ENCODE measurements at regions of chrX and their contacts with region 1.

Region 1: DNA sequence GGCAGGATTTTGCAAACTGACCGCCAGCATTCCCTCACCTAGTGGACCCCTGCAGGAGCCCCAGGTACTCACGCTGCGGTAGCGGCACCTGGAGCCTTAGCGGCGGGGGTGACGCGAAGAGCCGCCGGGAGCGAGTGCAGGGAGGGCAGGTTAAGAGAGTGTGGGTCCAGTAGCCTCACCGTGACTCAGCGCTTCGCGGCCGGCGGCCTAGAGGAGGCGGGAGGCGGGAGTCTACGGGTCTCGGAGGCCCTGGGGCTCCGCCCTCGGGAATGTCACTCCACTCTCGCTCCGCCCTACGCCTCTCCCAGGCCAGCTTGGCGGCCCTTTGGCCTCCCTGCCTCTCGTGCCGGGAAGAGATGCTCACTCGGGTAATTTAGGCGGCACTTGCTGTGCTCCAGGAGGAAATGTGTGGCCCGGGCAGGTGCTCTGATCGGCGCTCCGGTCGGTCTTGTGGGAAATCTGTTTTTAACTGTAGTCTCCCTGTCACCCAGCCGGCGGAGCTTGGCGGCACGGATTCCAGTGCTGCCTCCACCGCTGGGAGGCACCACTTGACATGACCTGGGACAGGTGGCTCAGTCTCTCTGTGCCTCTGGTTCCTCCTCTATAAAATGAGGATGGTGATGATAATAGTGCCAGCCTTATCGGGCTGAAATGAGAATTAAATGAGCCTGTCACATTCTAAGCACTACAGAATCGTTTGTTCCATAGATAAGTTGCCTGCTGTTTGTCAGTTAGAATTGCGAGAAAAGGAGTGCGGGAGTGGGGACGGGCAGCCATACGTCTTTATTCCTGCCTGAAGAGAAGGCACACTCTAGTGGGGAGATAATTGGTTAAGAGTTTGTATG is at the start of gene PIR:
- DNase-seq: peak; percentile 92
- H3K4me3 Mint-ChIP-seq: peak within 1 kb of the TSS; percentile 85
- H3K27ac Mint-ChIP-seq: peak within 1 kb of the TSS; percentile 46
- H3K4me1 Mint-ChIP-seq: peaks cover 22% of the 10 kb centered on the region
- H3K27me3 Mint-ChIP-seq: no peaks in the 10 kb centered on the region
- CTCF ChIP-seq: no peak
- total RNA-seq, gene PIR: 32.1 and 40.9 TPM in 2 replicates

Region 2: DNA sequence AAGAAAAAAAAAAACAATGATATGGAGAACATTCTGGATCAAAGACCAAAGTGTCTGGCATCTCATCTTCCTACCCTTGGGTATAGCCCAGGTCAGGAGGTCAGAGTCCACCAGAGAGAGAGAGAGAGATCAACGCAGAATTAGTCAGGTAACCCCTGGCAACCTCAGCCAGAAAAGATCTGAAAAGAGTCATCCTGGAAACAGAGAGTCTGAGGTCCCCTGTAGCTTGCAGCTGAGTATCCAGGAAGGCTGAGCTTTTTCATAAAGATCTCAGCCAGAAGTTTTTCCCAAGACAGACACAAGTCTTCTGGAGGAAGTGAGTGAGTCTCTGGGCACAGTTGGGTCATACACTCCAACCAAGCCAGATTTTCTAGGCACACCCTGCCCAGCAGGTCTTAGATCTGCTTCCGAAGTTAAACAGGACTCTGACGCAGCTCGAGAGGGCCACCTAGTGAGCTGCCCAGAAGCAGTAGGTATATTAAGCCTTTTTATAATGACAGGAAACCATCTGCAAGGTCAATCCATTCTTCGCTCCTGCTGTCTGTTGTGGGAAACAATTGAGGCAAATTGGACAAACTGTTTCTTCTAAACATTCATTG is 71.7 kb after region 1 on chrX:
- CTCF ChIA-PET with region 1: interaction called, 11 read pairs
- intact Hi-C with region 1: loop called (anchors 1 kb)
- DNase-seq: peak; percentile 70
- H3K4me3 Mint-ChIP-seq: no peak overlapping the region
- H3K27ac Mint-ChIP-seq: peak overlapping the region; percentile 47
- H3K4me1 Mint-ChIP-seq: peaks cover 14% of the 10 kb centered on the region
- H3K27me3 Mint-ChIP-seq: no peaks in the 10 kb centered on the region
- CTCF ChIP-seq: peak; percentile 29

Region 3: DNA sequence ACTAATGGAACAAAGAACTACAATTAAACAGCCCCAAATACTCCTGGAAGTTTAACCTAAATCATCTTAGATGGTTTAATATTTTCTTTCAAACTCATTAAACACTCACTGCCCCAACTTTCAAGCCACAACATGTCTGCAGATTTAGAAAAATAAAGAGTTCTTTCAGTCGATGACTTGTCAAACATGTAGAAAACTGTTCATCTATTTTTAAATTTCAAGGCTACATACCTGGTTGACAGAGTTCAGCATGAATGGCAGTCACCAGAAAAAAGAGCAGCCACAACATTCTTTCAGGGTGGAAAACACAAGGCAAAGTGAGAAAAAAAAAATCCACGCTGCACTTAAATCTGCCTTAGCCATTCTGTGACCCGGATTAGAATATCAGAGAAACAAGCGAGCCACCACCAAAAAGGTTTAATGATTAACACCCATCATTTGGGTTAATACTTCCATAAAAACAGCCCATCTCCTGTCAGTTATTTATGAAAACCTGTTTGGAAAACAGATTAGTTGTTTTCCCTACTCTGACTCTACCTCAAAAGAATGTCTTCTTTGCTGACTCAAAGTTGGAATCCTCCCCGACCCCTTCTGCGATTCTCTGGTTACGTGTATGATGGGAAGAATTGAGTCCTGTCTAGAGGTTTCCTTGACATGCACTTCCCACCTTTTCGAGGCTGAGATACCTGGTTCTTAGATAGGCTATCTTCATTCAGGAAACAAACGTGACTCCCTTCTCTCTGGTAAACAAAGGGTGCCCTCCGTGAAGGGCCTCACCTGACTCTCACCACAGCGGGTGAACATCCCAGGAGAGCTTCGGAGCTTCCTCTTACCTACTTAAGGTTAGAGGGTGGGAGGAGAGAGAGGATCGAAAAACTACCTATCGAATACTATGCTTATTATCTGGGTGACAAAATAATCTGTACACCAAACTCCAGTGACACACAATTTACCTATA is 171.4 kb after region 1 on chrX and contains the start of gene CLTRN:
- CTCF ChIA-PET with region 1: no interaction called
- intact Hi-C with region 1: loop called (anchors 10 kb)
- DNase-seq: peak; percentile 9
- H3K4me3 Mint-ChIP-seq: peak within 1 kb of the TSS; percentile 44
- H3K27ac Mint-ChIP-seq: peak within 1 kb of the TSS; percentile 13
- H3K4me1 Mint-ChIP-seq: peaks cover 25% of the 10 kb centered on the region
- H3K27me3 Mint-ChIP-seq: no peaks in the 10 kb centered on the region
- CTCF ChIP-seq: no peak
- total RNA-seq, gene CLTRN: 35.3 and 61.4 TPM in 2 replicates

Region 4: DNA sequence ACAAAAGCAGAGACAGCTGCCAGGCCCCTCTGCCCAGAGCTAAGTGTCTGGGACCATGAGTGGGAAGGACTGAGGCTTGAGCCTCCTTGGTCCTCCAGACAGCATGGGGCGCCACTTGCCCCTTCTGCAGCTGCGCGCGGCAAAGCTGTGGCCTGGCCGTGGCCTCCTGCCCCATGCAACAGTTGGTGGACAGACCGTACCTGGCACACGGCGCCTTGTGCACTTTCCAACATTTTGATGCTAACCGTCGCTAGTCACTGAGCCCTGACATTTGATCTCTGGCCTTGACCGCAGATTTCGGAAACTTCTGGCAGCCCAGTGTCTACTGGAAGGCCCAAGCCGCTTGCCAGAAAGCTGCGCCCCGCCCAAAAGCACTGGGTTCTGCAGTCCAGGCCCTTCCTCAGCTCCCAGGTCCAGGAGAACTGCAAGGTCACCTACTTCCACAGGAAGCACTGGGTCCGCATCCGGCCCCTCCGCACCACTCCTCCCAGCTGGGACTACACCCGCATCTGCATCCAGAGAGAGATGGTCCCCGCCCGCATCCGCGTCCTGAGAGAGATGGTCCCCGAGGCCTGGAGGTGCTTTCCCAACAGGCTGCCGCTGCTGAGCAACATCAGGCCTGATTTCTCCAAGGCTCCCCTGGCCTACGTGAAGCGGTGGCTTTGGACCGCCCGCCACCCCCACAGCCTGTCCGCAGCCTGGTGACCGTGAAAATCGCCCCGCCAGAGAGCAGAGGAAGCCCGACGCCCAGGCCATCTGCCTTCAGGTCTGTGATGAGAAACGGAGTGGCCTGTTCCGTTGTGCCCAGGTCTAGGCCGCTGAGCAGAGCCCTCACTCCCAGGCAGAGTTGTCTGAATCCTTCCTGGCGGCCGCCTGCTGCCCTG is 209.4 kb after region 1 on chrX:
- CTCF ChIA-PET with region 1: no interaction called
- intact Hi-C with region 1: no loop called
- DNase-seq: no peak
- H3K4me3 Mint-ChIP-seq: no peak overlapping the region
- H3K27ac Mint-ChIP-seq: no peak overlapping the region
- H3K4me1 Mint-ChIP-seq: no peaks in the 10 kb centered on the region
- H3K27me3 Mint-ChIP-seq: no peaks in the 10 kb centered on the region
- CTCF ChIP-seq: no peak

Measured in Calu3 (cell line).